Mucosa of descending colon (tissue), 3 donors: ENCODE measurements at regions of chr4 and their contacts with region 1.

Region 1: DNA sequence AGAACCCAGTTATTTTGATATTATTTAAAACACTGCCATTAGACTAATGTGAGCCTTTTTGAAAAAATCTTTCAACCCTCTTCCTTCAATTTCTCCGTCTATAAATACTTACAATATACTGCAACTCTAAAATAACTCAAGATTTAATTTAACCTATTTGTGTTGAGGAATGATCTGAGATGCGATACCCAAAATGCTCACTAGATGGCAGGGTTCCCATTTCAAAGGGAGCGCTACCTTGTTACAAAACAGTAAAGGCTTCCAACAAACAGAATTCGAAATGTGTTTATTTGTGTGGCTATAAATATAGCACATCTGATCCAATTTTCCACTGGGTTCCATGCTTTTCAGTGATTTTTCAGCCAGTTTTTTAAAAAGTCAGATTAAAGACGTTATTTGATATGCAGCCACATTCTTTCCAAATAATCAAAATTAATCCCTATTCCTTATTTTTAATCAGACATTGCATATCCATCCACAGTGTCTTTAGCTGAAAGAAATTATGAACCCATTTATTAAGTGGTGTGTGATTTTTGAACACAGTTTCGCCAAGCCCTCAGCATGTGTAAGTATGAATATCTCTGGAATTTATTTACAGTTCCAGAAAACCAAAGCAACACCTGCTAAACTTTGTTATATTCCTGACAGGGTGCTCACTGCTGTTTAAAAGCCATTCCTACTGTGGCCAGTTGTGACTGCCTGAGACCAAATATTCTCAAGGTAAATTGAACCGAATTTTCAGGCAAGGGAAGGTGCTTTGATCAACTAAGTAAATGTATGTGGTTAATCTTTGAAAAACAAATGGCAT is 668.0 kb upstream of the LCORL start:
- DNase-seq: peak in 1 of 3 donors; percentile 86
- ATAC-seq: peak; percentile 65
- H3K4me3 ChIP-seq: no peak overlapping the region
- H3K4me1 ChIP-seq: no peaks in the 10 kb centered on the region
- CTCF ChIP-seq: peak; percentile 53

Region 2: DNA sequence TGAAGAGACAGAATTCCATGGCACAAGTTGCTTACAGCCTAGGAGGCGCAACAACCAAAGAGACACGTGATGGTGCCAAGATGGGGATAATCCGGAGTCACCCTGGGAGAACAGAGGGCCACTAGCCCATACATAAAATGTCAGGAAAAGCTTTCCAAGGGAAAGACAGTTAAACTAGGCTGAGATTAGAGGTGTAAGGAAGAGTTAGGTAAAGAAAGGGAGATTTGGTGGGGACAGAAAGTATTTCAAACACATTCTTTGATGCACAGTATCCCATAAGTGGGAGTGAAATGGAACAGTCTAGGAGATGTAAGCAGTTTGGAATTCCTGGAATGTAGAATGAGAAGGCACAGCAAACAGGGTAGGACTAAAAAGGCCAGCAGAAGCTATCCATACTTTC is 193.0 kb after region 1 on chr4:
- intact Hi-C with region 1: no loop called
- DNase-seq: no peak
- ATAC-seq: no peak
- H3K4me3 ChIP-seq: no peak overlapping the region
- H3K4me1 ChIP-seq: no peaks in the 10 kb centered on the region
- CTCF ChIP-seq: no peak

Region 3: DNA sequence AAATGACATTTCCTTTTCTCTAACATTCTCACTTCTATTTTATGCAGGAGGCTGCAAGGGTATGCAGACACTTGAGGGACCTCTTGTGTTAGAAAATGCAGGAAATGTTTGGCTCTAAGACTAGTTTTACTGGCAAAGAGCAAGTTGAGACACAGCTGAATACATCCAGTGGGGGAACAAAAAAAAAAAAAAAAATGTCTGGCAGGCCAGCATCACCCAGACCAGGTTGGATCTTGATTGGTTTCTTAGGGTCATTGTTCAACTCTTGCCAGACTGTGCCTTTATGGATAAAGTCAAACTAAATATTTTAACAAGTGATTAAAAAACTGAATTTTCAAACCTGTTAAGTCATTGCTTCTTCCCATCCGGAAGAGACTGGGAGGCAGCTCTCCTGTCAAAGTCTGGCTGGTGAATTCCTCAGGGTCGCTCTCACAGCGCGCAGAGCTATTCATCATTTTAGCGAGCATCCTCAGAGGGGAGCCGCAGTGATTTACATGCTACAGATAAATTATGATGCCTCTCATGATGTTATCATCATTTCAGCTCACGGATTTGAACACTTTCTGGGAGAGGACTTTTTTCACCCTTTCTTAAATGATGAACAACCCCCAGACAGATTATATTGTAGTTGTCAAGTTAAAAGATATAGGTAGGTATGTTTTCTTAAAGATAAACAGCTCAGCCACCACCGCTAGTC is 1987.1 kb after region 1 on chr4:
- intact Hi-C with region 1: loop called in 1 of 2 experiments (anchors 10 kb)
- DNase-seq: no peak
- ATAC-seq: no peak
- H3K4me3 ChIP-seq: no peak overlapping the region
- H3K4me1 ChIP-seq: no peaks in the 10 kb centered on the region
- CTCF ChIP-seq: no peak